ENCODE measurements at regions of chr2 and their contacts with region 1.

Region 1: DNA sequence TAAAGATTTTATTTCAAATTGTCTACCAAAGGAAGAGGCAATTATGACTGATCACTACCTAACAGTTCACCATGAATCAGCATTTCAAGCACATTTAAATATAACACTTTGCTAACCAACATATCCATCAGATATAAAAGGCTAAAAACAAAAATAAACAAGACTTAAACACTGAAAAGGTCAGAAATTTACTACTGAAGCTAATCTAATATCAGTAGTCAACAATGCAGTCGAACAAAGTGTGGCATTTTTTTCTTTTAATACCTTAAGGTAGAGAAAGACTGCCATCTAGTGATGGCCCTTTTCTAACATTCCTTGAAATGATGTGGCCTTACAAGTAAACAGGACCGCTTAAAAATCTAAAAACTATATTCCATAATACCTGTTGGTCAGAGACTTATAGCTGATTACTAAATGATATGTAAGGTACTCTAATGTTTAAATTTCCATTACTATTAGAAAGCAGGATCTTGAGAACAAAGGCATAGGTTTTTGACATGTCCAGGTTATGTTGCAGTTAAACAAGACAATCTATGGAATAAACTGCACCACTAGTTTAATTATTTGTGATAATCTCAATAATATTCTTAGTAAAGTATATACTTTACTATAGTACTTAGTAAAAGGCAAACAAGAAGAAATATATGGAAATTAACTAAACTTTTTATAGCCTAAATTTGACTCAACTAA is 80.0 kb downstream of the EXOC6B start:
- DNase-seq: no peak
- ATAC-seq: peak; percentile 55 to 83 (median 62)
- H3K4me3 ChIP-seq: peak overlapping the region; percentile 29
- H3K27ac ChIP-seq: no peak overlapping the region
- H3K4me1 ChIP-seq: no peaks in the 10 kb centered on the region
- H3K27me3 ChIP-seq: no peaks in the 10 kb centered on the region
- CTCF ChIP-seq: peak; percentile 82

Region 2: GRCh38 chr2:71530641-71531332 is 1215.0 kb before region 1 on chr2:
- intact Hi-C with region 1: loop called in 1 of 2 experiments (anchors 5 kb)
- DNase-seq: no peak
- ATAC-seq: peak; percentile 52 to 78 (median 62)
- H3K4me3 ChIP-seq: no peak overlapping the region
- H3K27ac ChIP-seq: no peak overlapping the region
- H3K4me1 ChIP-seq: peaks cover 4% of the 10 kb centered on the region
- H3K27me3 ChIP-seq: no peaks in the 10 kb centered on the region
- CTCF ChIP-seq: peak; percentile 52

Region 3: DNA sequence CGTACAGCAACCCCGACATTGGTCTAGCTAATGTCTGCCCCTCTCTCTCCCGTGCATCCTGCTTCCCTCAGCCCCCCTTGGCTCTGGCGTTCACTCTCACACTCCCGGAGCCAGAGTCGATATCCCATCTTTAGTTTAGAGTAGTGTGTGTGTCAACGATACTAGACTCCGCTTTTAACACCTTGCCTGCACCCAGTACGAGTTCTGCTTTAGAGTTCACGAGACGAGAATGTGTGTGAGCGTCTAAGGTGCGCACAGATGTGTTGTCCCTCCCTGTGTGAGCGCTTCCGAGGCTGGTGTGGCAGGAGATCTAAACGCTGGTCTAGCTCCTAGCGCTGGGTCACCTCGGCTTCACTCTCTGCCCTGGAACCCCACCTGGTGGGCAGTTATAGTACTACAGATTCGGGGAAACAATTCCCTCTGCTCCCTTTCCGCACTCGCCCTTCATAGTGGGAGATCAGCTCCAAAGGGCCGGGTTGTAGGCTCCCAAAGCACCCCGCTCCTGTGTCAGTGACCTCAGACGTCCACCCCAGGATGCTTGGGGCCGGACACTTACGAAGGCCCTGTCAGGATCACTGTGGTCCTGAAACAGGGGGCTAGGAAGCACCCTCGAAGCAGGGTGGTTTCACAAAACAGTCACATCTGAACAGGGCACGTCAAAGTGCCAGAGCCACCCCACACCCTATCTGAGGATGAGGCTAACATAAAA is 595.5 kb before region 1 on chr2:
- intact Hi-C with region 1: loop called in 1 of 2 experiments (anchors 10 kb)
- DNase-seq: peak; percentile 66 to 83
- ATAC-seq: peak; percentile 82 to 89 (median 86)
- H3K4me3 ChIP-seq: peak overlapping the region; percentile 73
- H3K27ac ChIP-seq: no peak overlapping the region
- H3K4me1 ChIP-seq: peaks cover 37% of the 10 kb centered on the region
- H3K27me3 ChIP-seq: peaks cover 0 to 53% (median 22%) of the 10 kb centered on the region in 3 donors
- CTCF ChIP-seq: peak; percentile 88